Activated naive CD4-positive, alpha-beta T cell treated with anti-CD3 and anti-CD28 coated beads for 36 hours (primary cell): ENCODE measurements at regions of chr7 and their contacts with region 1.

Region 1: DNA sequence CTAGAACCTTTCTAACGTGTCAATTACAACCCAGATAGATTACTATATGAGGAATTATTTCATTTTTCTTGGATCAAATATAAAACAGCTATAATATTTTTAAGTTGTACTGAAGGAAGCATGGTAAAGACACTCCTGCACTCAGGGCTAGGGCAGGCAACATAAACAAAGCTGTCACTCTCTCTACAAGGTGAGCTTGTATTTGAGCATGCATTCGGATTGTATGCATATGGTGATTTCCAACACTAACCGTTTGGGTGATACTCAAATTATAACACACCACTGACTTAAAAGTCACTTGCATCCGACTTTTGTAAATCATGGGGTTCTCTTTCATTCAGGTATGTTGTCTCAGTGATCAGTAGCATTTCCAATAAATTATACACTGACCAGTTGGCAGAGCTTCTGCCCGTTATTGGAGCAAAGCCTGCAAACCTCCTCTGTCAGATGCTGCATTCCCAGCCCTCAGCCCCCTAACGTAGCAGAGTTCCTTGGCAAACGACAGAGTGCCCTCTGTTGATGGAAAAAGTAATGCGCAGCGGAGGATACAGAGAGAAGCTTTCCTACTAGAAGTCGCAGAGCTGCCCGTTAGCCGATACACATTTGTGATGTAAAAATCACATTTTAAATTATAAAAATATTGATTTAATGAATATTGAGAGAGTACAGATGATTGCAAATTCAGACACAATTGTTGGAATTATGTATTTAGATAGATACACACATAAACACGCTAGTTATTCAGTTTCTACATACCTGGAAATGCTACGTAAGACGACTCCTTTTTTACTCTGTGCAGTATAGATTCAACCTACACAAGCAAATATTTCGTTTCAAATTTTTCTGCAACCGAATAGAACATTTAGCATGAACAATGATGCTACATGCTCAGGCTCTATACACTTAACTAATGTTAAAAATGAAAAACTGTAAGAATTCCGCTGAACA is 173.9 kb upstream of the SP4 start:
- DNase-seq: peak; percentile 68
- H3K4me3 Mint-ChIP-seq: no peak overlapping the region
- H3K27ac Mint-ChIP-seq: no peak overlapping the region
- H3K4me1 Mint-ChIP-seq: peaks cover 2% of the 10 kb centered on the region
- H3K27me3 Mint-ChIP-seq: peaks cover 54% of the 10 kb centered on the region

Region 2: GRCh38 chr7:19708397-19709248 is 1545.4 kb before region 1 on chr7 and contains the start of gene POLR1F:
- CTCF ChIA-PET with region 1: no interaction called
- intact Hi-C with region 1: loop called (anchors 2 kb)
- DNase-seq: peak; percentile 95
- H3K4me3 Mint-ChIP-seq: peak within 1 kb of the TSS; percentile 87
- H3K27ac Mint-ChIP-seq: peak within 1 kb of the TSS; percentile 68
- H3K4me1 Mint-ChIP-seq: peaks cover 46% of the 10 kb centered on the region
- H3K27me3 Mint-ChIP-seq: no peaks in the 10 kb centered on the region
- total RNA-seq, gene POLR1F: 18.8 to 20.3 TPM

Region 3: GRCh38 chr7:20778063-20778721 is 475.8 kb before region 1 on chr7:
- CTCF ChIA-PET with region 1: interaction called, 3 read pairs
- intact Hi-C with region 1: loop called (anchors 1 kb)
- DNase-seq: peak; percentile 14
- H3K4me3 Mint-ChIP-seq: no peak overlapping the region
- H3K27ac Mint-ChIP-seq: no peak overlapping the region
- H3K4me1 Mint-ChIP-seq: peaks cover 20% of the 10 kb centered on the region
- H3K27me3 Mint-ChIP-seq: peaks cover 75% of the 10 kb centered on the region

Region 4: GRCh38 chr7:20798081-20798693 is 455.8 kb before region 1 on chr7:
- CTCF ChIA-PET with region 1: no interaction called
- intact Hi-C with region 1: loop called (anchors 5 kb)
- DNase-seq: peak; percentile 13
- H3K4me3 Mint-ChIP-seq: peak overlapping the region; percentile 38
- H3K27ac Mint-ChIP-seq: no peak overlapping the region
- H3K4me1 Mint-ChIP-seq: peaks cover 15% of the 10 kb centered on the region
- H3K27me3 Mint-ChIP-seq: peaks cover 61% of the 10 kb centered on the region

Region 5: GRCh38 chr7:21345361-21345760 is 91.3 kb after region 1 on chr7:
- CTCF ChIA-PET with region 1: no interaction called
- intact Hi-C with region 1: no loop called
- DNase-seq: no peak
- H3K4me3 Mint-ChIP-seq: no peak overlapping the region
- H3K27ac Mint-ChIP-seq: no peak overlapping the region
- H3K4me1 Mint-ChIP-seq: no peaks in the 10 kb centered on the region
- H3K27me3 Mint-ChIP-seq: no peaks in the 10 kb centered on the region

Region 6: GRCh38 chr7:21507626-21508343 is 253.8 kb after region 1 on chr7:
- CTCF ChIA-PET with region 1: interaction called, 4 read pairs
- intact Hi-C with region 1: loop called (anchors 1 kb)
- DNase-seq: peak; percentile 50
- H3K4me3 Mint-ChIP-seq: no peak overlapping the region
- H3K27ac Mint-ChIP-seq: no peak overlapping the region
- H3K4me1 Mint-ChIP-seq: no peaks in the 10 kb centered on the region
- H3K27me3 Mint-ChIP-seq: no peaks in the 10 kb centered on the region

Region 7: GRCh38 chr7:21568762-21569161 is 314.7 kb after region 1 on chr7:
- CTCF ChIA-PET with region 1: interaction called, 5 read pairs
- intact Hi-C with region 1: loop called (anchors 1 kb)
- DNase-seq: no peak
- H3K4me3 Mint-ChIP-seq: no peak overlapping the region
- H3K27ac Mint-ChIP-seq: no peak overlapping the region
- H3K4me1 Mint-ChIP-seq: no peaks in the 10 kb centered on the region
- H3K27me3 Mint-ChIP-seq: no peaks in the 10 kb centered on the region

Region 8: DNA sequence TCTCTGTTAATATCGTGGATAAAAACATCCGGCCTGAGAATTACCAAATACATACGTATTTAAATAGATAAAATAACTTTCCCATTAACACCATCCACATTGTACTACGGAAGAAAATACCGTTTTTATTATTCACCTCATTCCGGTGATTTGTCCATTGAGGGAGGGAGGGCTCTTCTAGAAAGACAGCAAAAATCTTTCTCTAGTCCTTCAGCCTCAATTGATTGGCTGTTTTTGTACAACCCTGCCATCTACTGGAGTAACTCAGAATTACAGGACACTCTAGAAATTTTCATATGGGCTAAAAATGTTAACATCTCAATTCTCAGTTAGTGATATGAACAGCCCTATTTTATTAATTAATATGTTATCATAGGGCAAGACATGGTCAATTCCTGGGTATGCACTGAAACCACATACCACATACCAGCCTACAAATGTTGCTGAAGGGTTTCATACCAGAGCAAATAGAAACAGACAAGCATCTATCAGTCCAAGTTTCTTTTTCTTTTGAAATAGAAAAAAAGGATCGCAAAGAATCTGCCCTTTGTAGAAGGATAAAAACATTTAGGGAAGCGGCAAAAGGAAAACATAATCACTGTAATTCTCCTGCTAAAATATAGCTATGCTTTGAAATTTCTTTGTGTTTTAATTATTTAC is 747.5 kb after region 1 on chr7:
- CTCF ChIA-PET with region 1: no interaction called
- intact Hi-C with region 1: loop called (anchors 1 kb)
- DNase-seq: peak; percentile 24
- H3K4me3 Mint-ChIP-seq: no peak overlapping the region
- H3K27ac Mint-ChIP-seq: no peak overlapping the region
- H3K4me1 Mint-ChIP-seq: peaks cover 3% of the 10 kb centered on the region
- H3K27me3 Mint-ChIP-seq: no peaks in the 10 kb centered on the region